Heart left ventricle (tissue), 16 donors: ENCODE measurements at regions of chr6 and their contacts with region 1.

Region 1: GRCh38 chr6:25263657-25264056 is 15.5 kb upstream of the CARMIL1 start:
- DNase-seq: no peak
- ATAC-seq: no peak
- H3K4me3 ChIP-seq: no peak overlapping the region
- H3K27ac ChIP-seq: no peak overlapping the region
- H3K4me1 ChIP-seq: peaks cover 0 to 8% (median 2%) of the 10 kb centered on the region in 12 donors
- H3K27me3 ChIP-seq: no peaks in the 10 kb centered on the region
- CTCF ChIP-seq: no peak
- POLR2A ChIP-seq: no peak

Region 2: GRCh38 chr6:24936641-24937317 is 326.9 kb before region 1 on chr6:
- intact Hi-C with region 1: no loop called
- DNase-seq: no peak
- ATAC-seq: no peak
- H3K4me3 ChIP-seq: peak overlapping the region in 1 of 12 donors; percentile 58
- H3K27ac ChIP-seq: peak overlapping the region in 1 of 12 donors; percentile 83
- H3K4me1 ChIP-seq: peaks cover 0 to 53% (median 3%) of the 10 kb centered on the region in 12 donors
- H3K27me3 ChIP-seq: no peaks in the 10 kb centered on the region
- CTCF ChIP-seq: no peak
- POLR2A ChIP-seq: no peak

Region 3: DNA sequence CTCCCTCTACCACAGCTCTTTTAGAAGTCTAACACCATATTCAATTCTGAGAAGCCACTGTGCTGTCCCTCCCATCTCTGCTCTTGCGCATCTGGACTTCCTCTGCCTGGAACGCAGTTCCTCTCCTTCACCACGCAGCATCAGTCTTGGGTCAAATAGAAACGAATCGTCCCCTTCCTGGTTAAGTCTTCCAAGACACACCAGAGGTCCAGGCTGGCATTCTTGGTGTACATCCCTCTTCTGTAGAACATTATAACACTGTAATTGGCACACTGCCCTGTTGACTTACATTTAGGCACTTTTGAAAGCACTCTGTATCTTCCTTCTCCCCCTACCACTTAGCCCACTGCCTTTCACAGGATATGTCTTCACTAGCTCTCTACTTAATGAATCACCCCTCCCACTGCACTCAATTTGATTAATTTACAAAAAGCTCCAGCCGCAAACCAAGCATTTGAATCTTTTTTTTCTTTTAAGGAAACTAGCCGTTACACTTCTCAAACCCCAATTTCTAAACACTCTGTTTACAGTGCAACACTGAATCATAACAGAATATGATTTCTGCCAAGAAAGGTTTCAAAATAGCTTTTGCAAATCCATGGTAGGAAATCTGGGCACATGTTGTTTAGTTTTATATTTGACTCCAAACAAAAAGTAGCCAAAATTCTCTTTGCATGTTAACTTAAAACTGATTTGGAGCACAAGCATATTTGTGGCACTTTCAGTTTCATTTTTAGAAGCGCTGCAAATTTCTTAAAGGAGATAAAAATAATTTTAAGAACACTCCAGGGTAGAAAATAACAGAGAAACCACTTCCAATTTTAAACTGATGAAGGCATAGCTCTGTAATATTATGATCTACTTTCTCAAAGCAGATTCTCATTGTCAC is 125.2 kb before region 1 on chr6:
- intact Hi-C with region 1: no loop called
- DNase-seq: peak in 4 of 5 donors; percentile 63 to 77 (median 71)
- ATAC-seq: peak; percentile 74 to 95 (median 92)
- H3K4me3 ChIP-seq: peak overlapping the region; percentile 16 to 64 (median 52)
- H3K27ac ChIP-seq: peak overlapping the region; percentile 78 to 96 (median 88)
- H3K4me1 ChIP-seq: peaks cover 0 to 29% (median 12%) of the 10 kb centered on the region in 12 donors
- H3K27me3 ChIP-seq: no peaks in the 10 kb centered on the region
- CTCF ChIP-seq: peak in 4 of 12 donors; percentile 8 to 40 (median 26)
- POLR2A ChIP-seq: peak in 1 of 2 donors; percentile 67

Region 4: GRCh38 chr6:25229671-25230321 is 33.9 kb before region 1 on chr6:
- intact Hi-C with region 1: loop called in 1 of 10 experiments (anchors 5 kb)
- DNase-seq: no peak
- ATAC-seq: peak in 3 of 4 donors; percentile 37 to 58 (median 42)
- H3K4me3 ChIP-seq: no peak overlapping the region
- H3K27ac ChIP-seq: peak overlapping the region in 4 of 12 donors; percentile 34 to 50 (median 42)
- H3K4me1 ChIP-seq: peaks cover 0 to 8% (median 0%) of the 10 kb centered on the region in 12 donors
- H3K27me3 ChIP-seq: no peaks in the 10 kb centered on the region
- CTCF ChIP-seq: no peak
- POLR2A ChIP-seq: no peak

Region 5: DNA sequence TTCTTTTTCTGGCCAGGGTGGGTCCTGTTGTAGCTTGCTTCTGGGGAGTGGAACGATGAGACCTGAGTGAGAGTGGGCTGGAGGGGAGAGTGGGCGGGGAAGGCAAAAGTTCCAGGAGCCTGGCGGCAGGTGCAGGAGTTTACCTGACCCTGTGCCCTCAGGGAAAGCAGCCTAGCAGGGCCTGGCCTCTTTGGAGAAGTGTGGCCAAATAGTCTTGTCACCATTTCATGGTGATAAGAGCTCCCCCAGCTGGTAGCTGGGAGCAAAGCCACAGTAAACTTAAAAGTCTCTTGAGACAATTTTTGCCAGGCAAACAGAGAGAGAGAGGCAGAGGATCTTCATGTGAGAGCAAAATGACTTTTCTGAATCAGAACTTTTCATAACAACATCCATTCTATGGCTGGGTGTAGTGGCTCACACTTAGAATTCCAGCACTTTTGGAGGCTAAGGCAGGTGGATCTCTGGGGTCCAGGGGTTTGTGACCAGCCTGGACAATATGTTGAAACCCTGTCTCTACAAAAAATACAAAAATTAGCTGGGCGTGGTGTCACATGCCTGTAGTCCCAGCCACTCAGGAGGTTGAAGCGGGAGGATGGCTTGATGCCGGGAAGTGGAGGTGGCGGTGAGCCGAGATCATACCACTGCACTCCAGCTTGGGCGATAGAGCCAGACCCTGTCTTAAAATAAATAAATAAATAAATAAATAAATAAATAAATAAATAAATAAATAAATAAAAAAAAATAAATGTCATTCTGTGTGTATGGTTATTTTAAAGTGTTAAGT is 226.6 kb after region 1 on chr6:
- intact Hi-C with region 1: loop called in 2 of 10 experiments (anchors 1 kb)
- DNase-seq: peak; percentile 61 to 74 (median 72)
- ATAC-seq: peak; percentile 57 to 90 (median 86)
- H3K4me3 ChIP-seq: no peak overlapping the region
- H3K27ac ChIP-seq: peak overlapping the region in 4 of 12 donors; percentile 6 to 37 (median 26)
- H3K4me1 ChIP-seq: peaks cover 0 to 28% (median 15%) of the 10 kb centered on the region in 12 donors
- H3K27me3 ChIP-seq: no peaks in the 10 kb centered on the region
- CTCF ChIP-seq: peak; percentile 59 to 87 (median 78)
- POLR2A ChIP-seq: no peak

Region 6: DNA sequence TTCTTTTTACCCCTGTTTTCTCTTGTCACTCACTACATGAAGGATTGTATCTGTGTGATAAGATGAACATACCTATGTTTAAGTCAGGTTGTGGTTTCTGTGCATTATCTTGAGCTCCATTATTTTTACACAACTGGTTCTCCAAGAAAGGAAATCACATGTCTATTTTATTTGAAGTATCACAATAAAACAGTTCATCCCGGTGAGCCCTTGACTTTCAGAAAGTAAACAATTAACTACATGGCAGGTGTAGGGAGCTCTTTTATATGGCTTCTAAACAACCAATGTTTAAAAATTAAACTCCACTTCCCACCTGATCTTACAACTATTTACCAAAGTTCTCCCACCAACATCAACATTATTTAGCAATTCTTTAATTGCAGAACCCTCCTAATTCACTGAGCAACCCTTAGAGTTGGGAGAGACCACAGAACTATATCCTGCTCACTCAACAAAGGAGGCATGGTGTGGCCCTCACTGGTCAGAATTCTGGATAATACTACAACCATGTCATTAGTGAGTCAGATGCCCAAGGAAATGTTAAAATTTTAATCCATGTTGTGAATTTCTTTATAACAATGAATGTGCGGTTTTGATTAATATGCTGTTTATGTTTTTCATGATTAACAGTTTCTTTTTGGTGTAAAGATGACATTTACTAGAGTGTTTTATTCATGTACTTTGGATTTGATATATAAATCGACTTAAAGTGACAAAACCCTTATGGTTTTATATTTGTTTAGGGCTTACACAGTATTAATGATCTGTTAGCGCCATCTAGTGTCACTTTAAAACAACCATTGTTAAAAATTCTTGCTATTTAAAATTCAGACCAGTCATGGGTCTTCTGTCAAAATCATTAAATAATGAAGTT is 338.4 kb after region 1 on chr6:
- intact Hi-C with region 1: loop called in 6 of 10 experiments (anchors 2 to 10 kb)
- DNase-seq: no peak
- ATAC-seq: peak in 1 of 4 donors; percentile 22
- H3K4me3 ChIP-seq: no peak overlapping the region
- H3K27ac ChIP-seq: no peak overlapping the region
- H3K4me1 ChIP-seq: no peaks in the 10 kb centered on the region
- H3K27me3 ChIP-seq: peaks cover 0 to 3% (median 0%) of the 10 kb centered on the region in 9 donors
- CTCF ChIP-seq: peak; percentile 43 to 71 (median 62)
- POLR2A ChIP-seq: no peak

Region 7: DNA sequence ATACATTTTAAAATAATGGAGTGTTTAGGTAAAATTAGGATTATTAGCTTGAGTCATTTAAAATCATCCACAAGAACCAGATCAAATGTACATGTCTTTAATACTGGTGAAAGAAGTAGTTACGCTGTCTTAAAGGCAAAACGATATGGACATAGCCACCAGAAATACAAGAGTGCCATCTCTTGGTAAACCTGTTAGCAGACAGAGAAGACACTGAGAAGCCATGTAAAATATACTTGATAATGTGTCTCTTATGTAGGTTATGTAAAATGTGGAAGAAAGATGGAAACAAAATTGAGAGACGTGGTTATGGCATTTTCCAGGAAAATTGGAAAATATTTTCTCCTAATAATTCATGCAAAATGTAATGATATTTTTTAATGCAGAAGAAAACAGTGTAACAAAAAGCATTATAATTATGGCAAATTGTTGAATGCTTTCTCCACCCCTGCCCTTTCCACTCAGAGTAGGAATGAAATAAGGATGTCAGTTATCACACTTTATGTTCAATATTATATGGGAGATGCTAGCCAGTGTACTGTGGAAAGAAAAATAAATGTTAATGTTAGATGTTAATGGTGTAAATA is 679.0 kb after region 1 on chr6:
- intact Hi-C with region 1: loop called in 1 of 10 experiments (anchors 5 kb)
- DNase-seq: no peak
- ATAC-seq: peak in 1 of 4 donors; percentile 59
- H3K4me3 ChIP-seq: no peak overlapping the region
- H3K27ac ChIP-seq: no peak overlapping the region
- H3K4me1 ChIP-seq: peaks cover 0 to 3% (median 0%) of the 10 kb centered on the region in 12 donors
- H3K27me3 ChIP-seq: no peaks in the 10 kb centered on the region
- CTCF ChIP-seq: peak in 11 of 12 donors; percentile 7 to 63 (median 40)
- POLR2A ChIP-seq: no peak